CD4-positive, alpha-beta T cell (primary cell): ENCODE measurements at regions of chr1 and their contacts with region 1.

Region 1: DNA sequence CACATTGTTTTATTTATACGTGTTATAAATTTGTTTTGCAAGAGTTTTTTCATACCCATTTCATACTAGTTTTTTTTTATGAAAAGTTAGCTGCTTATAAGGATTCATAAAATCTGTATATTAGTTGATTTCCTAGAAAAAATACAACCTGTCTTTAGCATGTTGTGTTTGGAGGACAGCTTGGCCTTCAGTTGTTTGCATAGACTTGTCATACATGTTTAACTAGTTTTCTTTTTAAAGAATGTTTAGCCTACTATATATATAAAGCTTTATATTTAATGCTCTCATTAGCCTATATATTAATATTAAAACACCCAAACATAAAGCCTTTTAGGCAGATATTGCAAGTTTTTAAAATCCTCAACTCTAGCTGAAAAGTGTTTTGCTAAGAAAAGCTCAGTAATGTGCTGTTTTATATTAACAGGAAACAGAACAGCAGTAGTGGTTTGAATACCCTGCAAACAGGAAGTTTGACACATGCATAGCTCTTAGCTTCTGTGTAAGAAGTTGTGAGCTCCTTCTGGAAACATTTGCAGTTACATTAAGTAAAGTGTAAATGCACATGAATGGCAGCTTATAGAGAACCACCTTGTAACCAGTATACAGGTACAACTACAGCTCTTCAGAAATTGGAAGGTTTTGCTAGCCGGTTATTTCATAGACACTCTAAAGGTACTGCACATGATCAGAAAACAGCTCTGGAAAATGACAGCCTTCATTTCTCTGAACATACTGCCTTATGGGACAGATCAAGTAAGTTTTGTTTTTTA is at the start of gene PRKACB:
- DNase-seq: peak in 5 of 14 experiments; percentile 7 to 81 (median 76)
- ATAC-seq: peak; percentile 87
- H3K4me3 ChIP-seq: peak within 1 kb of the TSS; percentile 57
- H3K4me3 Mint-ChIP-seq: peak within 1 kb of the TSS; percentile 100
- H3K27ac ChIP-seq: peak within 1 kb of the TSS; percentile 49 to 63
- H3K27ac Mint-ChIP-seq: peak within 1 kb of the TSS; percentile 99
- H3K4me1 ChIP-seq: peaks cover 8% of the 10 kb centered on the region
- H3K4me1 Mint-ChIP-seq: peaks cover 63% of the 10 kb centered on the region
- H3K27me3 ChIP-seq: no peaks in the 10 kb centered on the region
- H3K27me3 Mint-ChIP-seq: no peaks in the 10 kb centered on the region
- CTCF ChIP-seq: no peak
- total RNA-seq, gene PRKACB: 49.7 to 52.4 TPM

Region 2: DNA sequence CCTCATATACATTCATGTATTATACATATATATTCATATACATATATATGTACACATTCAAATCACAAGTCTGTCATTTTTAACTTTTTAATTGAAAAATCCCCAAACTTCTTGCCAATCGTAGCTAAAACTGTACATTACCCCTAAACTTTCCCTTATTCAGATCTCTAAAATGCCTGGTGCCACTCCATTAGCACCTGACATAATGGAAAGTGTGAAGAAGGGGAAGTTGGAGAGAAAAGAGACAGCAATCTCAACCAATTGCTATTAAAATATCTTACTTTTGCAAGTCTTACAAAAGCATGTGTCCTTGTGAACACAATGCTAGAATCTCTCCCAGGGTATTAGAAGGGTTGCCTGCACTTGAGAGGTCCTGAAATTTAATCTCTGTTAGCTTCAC is 22.6 kb before region 1 on chr1:
- CTCF ChIA-PET with region 1: no interaction called
- POLR2A ChIA-PET with region 1: no interaction called
- intact Hi-C with region 1: no loop called
- DNase-seq: no peak
- ATAC-seq: no peak
- H3K4me3 ChIP-seq: no peak overlapping the region
- H3K4me3 Mint-ChIP-seq: no peak overlapping the region
- H3K27ac ChIP-seq: no peak overlapping the region
- H3K27ac Mint-ChIP-seq: no peak overlapping the region
- H3K4me1 ChIP-seq: no peaks in the 10 kb centered on the region
- H3K4me1 Mint-ChIP-seq: peaks cover 10% of the 10 kb centered on the region
- H3K27me3 ChIP-seq: no peaks in the 10 kb centered on the region
- H3K27me3 Mint-ChIP-seq: no peaks in the 10 kb centered on the region
- CTCF ChIP-seq: no peak

Region 3: GRCh38 chr1:84166797-84167196 is 22.8 kb after region 1 on chr1:
- CTCF ChIA-PET with region 1: interaction called, 5 read pairs
- POLR2A ChIA-PET with region 1: interaction called, 27 read pairs
- intact Hi-C with region 1: no loop called
- DNase-seq: no peak
- ATAC-seq: no peak
- H3K4me3 ChIP-seq: no peak overlapping the region
- H3K4me3 Mint-ChIP-seq: no peak overlapping the region
- H3K27ac ChIP-seq: no peak overlapping the region
- H3K27ac Mint-ChIP-seq: no peak overlapping the region
- H3K4me1 ChIP-seq: peaks cover 8% of the 10 kb centered on the region
- H3K4me1 Mint-ChIP-seq: peaks cover 93% of the 10 kb centered on the region
- H3K27me3 ChIP-seq: no peaks in the 10 kb centered on the region
- H3K27me3 Mint-ChIP-seq: no peaks in the 10 kb centered on the region
- CTCF ChIP-seq: no peak

Region 4: DNA sequence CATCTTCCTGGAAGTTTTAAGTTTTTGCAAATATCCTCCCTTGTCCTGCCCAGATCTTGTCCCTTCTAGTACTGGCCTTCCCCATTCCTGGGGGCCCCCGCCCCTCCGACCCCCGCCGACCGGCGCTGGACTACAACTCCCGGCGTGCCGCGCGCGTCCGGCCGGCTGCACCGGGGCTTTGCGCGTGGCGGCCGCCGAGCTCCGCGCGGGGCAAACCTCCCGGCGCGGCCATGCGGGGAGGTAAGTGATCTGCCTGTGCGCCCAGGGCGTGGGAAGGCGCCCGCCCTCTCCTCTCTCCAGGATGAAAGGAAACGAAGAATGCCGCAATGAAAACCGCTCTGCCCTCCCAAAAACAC is 154.3 kb after region 1 on chr1:
- CTCF ChIA-PET with region 1: no interaction called
- POLR2A ChIA-PET with region 1: interaction called, 17 read pairs
- intact Hi-C with region 1: loop called in 1 of 2 experiments (anchors 5 kb)
- DNase-seq: peak in 12 of 14 experiments; percentile 5 to 74 (median 44)
- ATAC-seq: peak; percentile 72
- H3K4me3 ChIP-seq: peak overlapping the region; percentile 82
- H3K4me3 Mint-ChIP-seq: peak overlapping the region; percentile 89
- H3K27ac ChIP-seq: no peak overlapping the region
- H3K27ac Mint-ChIP-seq: peak overlapping the region; percentile 37
- H3K4me1 ChIP-seq: peaks cover 24% of the 10 kb centered on the region
- H3K4me1 Mint-ChIP-seq: peaks cover 48% of the 10 kb centered on the region
- H3K27me3 ChIP-seq: peaks cover 0 to 9% of the 10 kb centered on the region in 2 experiments
- H3K27me3 Mint-ChIP-seq: peaks cover 12% of the 10 kb centered on the region
- CTCF ChIP-seq: no peak

Region 5: GRCh38 chr1:84442256-84442655 is 298.3 kb after region 1 on chr1:
- CTCF ChIA-PET with region 1: interaction called, 10 read pairs
- POLR2A ChIA-PET with region 1: interaction called, 87 read pairs
- intact Hi-C with region 1: no loop called
- DNase-seq: peak in 4 of 14 experiments; percentile 7 to 89 (median 86)
- ATAC-seq: peak; percentile 98
- H3K4me3 ChIP-seq: no peak overlapping the region
- H3K4me3 Mint-ChIP-seq: peak overlapping the region; percentile 5
- H3K27ac ChIP-seq: no peak overlapping the region
- H3K27ac Mint-ChIP-seq: peak overlapping the region; percentile 1
- H3K4me1 ChIP-seq: peaks cover 17% of the 10 kb centered on the region
- H3K4me1 Mint-ChIP-seq: peaks cover 11% of the 10 kb centered on the region
- H3K27me3 ChIP-seq: no peaks in the 10 kb centered on the region
- H3K27me3 Mint-ChIP-seq: peaks cover 15% of the 10 kb centered on the region
- CTCF ChIP-seq: peak; percentile 69

Region 6: DNA sequence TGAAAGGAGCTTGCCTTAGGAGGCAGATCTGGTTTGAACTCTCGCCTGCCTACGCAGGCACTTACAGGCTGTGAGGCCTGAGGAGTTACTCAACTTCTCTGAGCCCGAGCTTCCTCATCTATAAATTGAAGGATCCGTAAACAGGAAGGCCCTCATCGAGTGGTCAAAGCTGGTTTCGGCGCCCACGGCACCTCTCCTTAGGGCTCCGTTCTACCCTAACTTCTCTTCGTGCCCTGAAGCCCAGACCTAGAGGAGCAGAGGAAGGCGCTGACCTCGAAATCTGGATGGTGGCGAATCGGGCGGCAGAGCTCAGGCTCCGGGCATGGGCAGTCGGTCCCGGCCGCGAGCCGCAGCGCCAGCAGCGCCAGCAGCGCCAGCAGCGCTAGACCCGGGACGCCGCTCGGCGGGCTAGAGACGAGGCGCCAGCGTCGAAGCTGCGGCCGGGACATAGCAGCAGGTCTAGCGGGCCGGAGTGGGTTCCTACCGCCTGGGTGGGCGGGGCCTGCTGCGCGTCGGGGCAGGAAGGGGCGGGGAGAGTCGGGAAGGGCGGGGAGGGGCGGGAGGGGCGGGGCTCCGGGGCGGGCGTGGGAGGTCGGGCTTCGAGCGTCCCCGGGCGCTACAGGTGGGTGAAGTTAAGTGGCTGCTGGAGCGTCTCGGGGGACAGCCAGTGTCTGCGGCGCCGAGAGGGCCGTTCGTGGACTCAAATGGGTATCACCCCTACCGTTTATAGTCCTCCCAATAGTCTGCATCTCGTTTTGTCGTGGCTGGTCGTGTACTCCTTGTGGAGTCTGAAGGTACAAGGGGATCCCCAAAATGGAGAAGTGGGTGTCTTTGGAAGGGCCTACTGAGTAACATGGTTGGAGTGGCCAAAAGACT is 430.2 kb after region 1 on chr1 and contains the start of gene CTBS:
- CTCF ChIA-PET with region 1: interaction called, 6 read pairs
- POLR2A ChIA-PET with region 1: interaction called, 53 read pairs
- intact Hi-C with region 1: loop called in 1 of 2 experiments (anchors 5 kb)
- DNase-seq: peak; percentile 74 to 94 (median 83)
- ATAC-seq: peak; percentile 88
- H3K4me3 ChIP-seq: peak within 1 kb of the TSS; percentile 85
- H3K4me3 Mint-ChIP-seq: peak within 1 kb of the TSS; percentile 99
- H3K27ac ChIP-seq: peak within 1 kb of the TSS; percentile 95 to 97
- H3K27ac Mint-ChIP-seq: peak within 1 kb of the TSS; percentile 100
- H3K4me1 ChIP-seq: peaks cover 22% of the 10 kb centered on the region
- H3K4me1 Mint-ChIP-seq: peaks cover 48% of the 10 kb centered on the region
- H3K27me3 ChIP-seq: peaks cover 0 to 3% of the 10 kb centered on the region in 2 experiments
- H3K27me3 Mint-ChIP-seq: no peaks in the 10 kb centered on the region
- CTCF ChIP-seq: no peak
- total RNA-seq, gene CTBS: 19.4 to 20.0 TPM

Region 7: DNA sequence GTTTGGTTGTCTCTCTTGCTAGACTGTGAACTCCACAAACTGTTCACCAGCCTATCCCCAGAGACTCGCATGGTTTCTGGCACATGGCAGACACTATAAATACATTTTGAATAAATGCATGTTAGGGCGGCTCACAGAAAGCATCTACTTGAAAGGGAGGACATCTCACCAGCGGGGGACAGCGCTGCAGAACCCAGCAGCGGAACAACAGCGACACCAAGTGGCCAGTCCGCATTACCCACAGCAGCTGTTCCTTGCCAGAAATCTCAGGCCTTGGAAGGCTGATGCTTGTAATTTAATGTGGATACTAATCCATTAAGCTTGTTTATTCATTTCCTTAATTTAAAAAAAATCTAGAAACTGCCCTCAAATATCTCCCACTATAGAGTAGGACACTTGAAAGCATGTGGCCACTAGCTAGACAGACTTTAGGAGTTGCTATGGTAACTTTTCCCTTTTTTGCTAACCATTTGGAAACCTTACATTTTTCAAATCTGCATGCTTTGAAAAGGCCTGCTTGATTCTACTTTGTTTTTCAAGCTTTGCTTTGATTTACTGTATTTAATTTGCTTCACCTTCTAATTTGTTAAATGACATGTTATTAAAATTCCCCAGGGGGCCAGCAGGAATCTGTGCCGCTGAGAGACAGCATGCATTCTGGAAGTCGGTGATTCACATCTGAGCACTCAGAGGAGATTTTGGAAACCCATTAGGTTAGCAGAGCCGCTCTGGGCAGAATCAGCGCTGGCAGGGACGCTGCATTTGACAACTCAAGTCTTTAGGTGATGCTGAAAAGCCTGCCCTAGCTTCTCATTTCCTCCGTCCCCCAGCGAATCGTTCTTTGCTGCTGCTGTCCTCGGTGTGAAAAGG is 609.8 kb after region 1 on chr1:
- CTCF ChIA-PET with region 1: interaction called, 18 read pairs
- POLR2A ChIA-PET with region 1: interaction called, 4 read pairs
- intact Hi-C with region 1: loop called (anchors 1 to 2 kb)
- DNase-seq: peak; percentile 62 to 88 (median 73)
- ATAC-seq: peak; percentile 98
- H3K4me3 ChIP-seq: no peak overlapping the region
- H3K4me3 Mint-ChIP-seq: no peak overlapping the region
- H3K27ac ChIP-seq: no peak overlapping the region
- H3K27ac Mint-ChIP-seq: no peak overlapping the region
- H3K4me1 ChIP-seq: peaks cover 4% of the 10 kb centered on the region
- H3K4me1 Mint-ChIP-seq: peaks cover 3% of the 10 kb centered on the region
- H3K27me3 ChIP-seq: peaks cover 3 to 15% of the 10 kb centered on the region in 2 experiments
- H3K27me3 Mint-ChIP-seq: peaks cover 22% of the 10 kb centered on the region
- CTCF ChIP-seq: peak; percentile 97

Region 8: DNA sequence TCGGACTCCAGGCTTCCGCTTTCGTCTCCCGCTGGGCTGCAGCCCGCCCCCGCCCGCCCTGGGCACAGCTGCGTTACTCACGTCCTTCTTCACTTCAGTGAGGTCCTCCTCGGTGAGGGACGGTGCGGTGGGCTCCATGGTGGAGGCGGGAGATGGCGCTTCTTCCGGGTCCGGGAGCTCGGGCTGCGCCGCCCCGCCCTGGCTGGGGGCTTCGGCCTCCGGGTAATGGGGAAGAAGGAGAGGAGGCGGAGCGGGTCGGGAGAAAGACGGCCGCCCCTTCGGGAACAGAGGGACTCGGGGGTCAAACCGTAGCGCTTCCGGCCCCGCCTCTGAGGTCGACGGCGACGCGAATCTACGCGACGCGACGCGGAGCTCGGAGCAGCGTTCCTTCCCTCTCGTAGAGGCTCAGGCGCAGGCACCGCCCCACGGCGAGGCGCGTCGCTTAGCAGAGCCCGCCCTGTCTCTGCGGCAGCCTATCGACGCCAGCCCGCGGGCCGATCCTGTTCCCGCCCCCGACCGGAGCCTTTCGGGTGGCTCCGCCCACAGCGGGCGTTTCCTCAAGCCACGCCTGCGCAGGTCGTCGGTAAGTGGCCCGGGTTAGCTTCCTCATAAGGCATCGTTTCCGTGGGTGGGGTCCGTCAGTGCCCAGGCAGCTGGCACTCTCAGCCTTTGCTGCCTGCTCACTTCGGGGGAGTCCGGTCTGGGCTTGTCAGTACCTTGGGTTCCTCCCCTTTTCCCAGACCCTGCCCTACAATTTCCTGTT is 1132.4 kb after region 1 on chr1 and contains the start of gene BCL10:
- CTCF ChIA-PET with region 1: no interaction called
- POLR2A ChIA-PET with region 1: interaction called, 12 read pairs
- intact Hi-C with region 1: no loop called
- DNase-seq: peak; percentile 93 to 99 (median 96)
- ATAC-seq: peak; percentile 95
- H3K4me3 ChIP-seq: peak within 1 kb of the TSS; percentile 94
- H3K4me3 Mint-ChIP-seq: peak within 1 kb of the TSS; percentile 92
- H3K27ac ChIP-seq: peak within 1 kb of the TSS; percentile 90 to 99
- H3K27ac Mint-ChIP-seq: peak within 1 kb of the TSS; percentile 95
- H3K4me1 ChIP-seq: peaks cover 28% of the 10 kb centered on the region
- H3K4me1 Mint-ChIP-seq: peaks cover 57% of the 10 kb centered on the region
- H3K27me3 ChIP-seq: no peaks in the 10 kb centered on the region
- H3K27me3 Mint-ChIP-seq: no peaks in the 10 kb centered on the region
- CTCF ChIP-seq: no peak
- total RNA-seq, gene BCL10: 50.0 to 52.0 TPM